HEK293 (cell line): ENCODE measurements at regions of chr5 and their contacts with region 1.

Region 1: DNA sequence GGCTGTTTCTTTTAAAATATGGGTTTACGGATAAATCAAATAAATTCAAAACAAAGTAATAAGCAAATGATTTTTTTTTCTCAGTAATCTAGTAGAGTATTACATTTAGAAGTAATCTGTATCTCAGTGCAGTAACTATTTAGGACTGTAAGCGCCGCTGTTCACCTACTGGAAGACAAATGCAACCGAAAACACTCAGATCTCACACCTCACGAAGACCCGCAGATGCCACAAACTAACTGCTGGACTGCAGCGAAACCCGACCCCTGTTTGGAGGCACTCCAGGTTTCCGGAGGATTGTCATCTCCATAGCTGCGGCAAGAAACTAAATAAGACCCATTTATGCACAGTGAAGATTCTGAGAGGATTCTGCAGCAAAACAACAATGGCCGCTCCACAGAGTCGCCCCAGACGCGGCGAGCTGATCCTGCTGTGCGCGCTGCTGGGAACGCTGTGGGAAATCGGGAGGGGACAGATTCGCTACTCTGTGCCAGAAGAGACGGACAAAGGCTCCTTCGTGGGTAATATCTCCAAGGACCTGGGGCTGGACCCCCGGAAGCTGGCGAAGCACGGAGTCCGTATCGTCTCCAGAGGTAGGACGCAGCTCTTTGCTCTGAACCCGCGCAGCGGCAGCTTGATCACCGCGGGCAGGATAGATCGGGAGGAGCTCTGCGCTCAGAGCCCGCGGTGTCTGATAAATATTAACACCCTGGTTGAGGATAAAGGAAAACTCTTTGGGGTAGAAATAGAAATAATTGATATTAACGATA is at the start of gene PCDHGA8:
- H3K4me3 ChIP-seq: no peak within 1 kb of the TSS
- H3K27ac ChIP-seq: no peak within 1 kb of the TSS
- H3K4me1 ChIP-seq: no peaks in the 10 kb centered on the region
- CTCF ChIP-seq: no peak

Region 2: GRCh38 chr5:141369994-141370848 is 22.4 kb before region 1 on chr5 and contains the start of gene PCDHGB3:
- CTCF ChIA-PET with region 1: interaction called, 12 read pairs
- POLR2A ChIA-PET with region 1: no interaction called
- H3K4me3 ChIP-seq: no peak within 1 kb of the TSS
- H3K27ac ChIP-seq: no peak within 1 kb of the TSS
- H3K4me1 ChIP-seq: no peaks in the 10 kb centered on the region
- CTCF ChIP-seq: no peak